Dendritic cell treated with granulocyte-macrophage colony-stimulating factor and Interleukin-4, amounts not matched to agents 40 ng/mL and 50 ng/mL, for 4 days (primary cell): ENCODE measurements at regions of chr20 and their contacts with region 1.

Region 1: DNA sequence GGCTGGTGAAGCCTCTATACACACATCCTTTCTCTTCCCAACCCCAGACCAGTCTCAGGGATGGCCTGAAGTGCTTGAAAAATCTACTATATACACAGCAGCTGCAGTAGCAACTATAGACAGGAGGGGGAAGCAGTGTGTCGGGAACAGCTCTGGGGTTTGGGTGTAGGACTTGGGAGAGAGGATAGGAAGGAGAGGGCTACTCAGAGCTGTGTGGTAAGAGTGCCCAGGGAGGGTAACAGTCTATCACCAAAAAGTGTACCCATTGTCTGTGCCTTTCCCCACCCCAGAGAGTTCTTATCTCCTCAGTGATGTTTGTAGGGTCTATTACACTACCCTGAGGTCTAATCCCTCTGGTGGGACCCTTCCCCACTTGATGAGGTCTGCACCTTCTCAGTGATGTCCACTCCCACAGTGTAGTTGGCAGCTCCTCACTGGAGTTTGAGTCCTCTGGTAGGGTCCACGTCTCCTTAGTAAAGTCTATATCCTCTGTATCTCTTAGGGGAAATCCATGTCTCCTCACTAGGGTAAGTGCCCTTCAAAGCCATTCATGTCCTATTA is 1.5 kb upstream of the GGT7 start:
- H3K4me3 Mint-ChIP-seq: no peak overlapping the region
- H3K27ac Mint-ChIP-seq: peak overlapping the region; percentile 97
- H3K4me1 Mint-ChIP-seq: peaks cover 66% of the 10 kb centered on the region
- H3K27me3 Mint-ChIP-seq: peaks cover 10% of the 10 kb centered on the region

Region 2: GRCh38 chr20:34825530-34826362 is 48.4 kb before region 1 on chr20 and contains the start of gene NCOA6:
- intact Hi-C with region 1: loop called (anchors 2 kb)
- H3K4me3 Mint-ChIP-seq: peak within 1 kb of the TSS; percentile 95
- H3K27ac Mint-ChIP-seq: peak within 1 kb of the TSS; percentile 89
- H3K4me1 Mint-ChIP-seq: peaks cover 43% of the 10 kb centered on the region
- H3K27me3 Mint-ChIP-seq: no peaks in the 10 kb centered on the region

Region 3: GRCh38 chr20:34955232-34956040 is 81.3 kb after region 1 on chr20 and contains the starts of genes GSS and MYH7B:
- intact Hi-C with region 1: loop called (anchors 1 kb)
- H3K4me3 Mint-ChIP-seq: peak within 1 kb of the TSS; percentile 86
- H3K27ac Mint-ChIP-seq: peak within 1 kb of the TSS; percentile 96
- H3K4me1 Mint-ChIP-seq: peaks cover 21% of the 10 kb centered on the region
- H3K27me3 Mint-ChIP-seq: no peaks in the 10 kb centered on the region